ENCODE measurements at regions of chr18 and their contacts with region 1.

Region 1: DNA sequence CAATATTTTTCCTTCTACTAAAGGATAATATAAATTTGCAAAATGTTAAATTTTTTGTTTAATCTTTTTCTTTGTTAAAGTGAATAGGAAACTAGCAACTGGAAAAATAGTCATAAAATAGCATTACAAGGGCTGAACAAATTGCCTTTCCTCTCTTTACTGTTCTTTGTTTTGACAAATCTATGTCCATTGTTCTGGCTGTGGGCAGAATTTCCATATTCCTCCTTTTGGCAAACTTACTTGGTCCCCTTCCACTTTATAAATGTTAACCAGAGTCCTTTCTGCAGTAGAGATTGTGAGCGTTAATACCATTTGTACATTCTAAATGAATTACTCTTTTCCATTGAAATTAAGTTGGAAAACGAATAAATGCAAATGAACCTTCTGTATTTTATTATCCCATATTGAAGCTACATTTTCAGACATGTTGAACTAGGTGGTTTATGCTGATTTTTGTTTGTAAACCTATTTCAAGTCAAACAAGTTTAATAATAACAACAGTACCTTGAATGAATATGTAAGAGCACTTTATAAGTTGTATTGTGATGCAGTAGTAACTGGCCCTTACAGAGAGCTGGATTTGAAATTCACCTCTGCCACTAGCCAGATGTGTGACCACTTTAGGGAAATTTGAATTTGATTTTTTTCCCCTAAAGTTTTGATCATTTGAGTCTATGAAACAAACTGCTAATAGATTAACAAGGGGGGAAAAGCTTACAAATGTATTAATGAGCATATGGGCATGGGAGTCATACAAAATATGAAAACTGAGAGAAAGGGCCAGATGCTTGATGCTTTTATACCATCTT is 3.3 kb downstream of the RNF125 start:
- DNase-seq: no peak
- ATAC-seq: no peak
- H3K4me3 ChIP-seq: no peak overlapping the region
- H3K27ac ChIP-seq: no peak overlapping the region
- H3K4me1 ChIP-seq: no peaks in the 10 kb centered on the region
- H3K27me3 ChIP-seq: no peaks in the 10 kb centered on the region
- CTCF ChIP-seq: no peak

Region 2: GRCh38 chr18:32083781-32084180 is 61.8 kb after region 1 on chr18:
- intact Hi-C with region 1: loop called in 1 of 2 experiments (anchors 2 kb)
- DNase-seq: no peak
- ATAC-seq: no peak
- H3K4me3 ChIP-seq: no peak overlapping the region
- H3K27ac ChIP-seq: no peak overlapping the region
- H3K4me1 ChIP-seq: no peaks in the 10 kb centered on the region
- H3K27me3 ChIP-seq: peaks cover 0 to 2% (median 0%) of the 10 kb centered on the region in 3 donors
- CTCF ChIP-seq: no peak

Measured in psoas muscle (tissue), 8 donors.